ENCODE measurements at regions of chr5 and their contacts with region 1.

Region 1: DNA sequence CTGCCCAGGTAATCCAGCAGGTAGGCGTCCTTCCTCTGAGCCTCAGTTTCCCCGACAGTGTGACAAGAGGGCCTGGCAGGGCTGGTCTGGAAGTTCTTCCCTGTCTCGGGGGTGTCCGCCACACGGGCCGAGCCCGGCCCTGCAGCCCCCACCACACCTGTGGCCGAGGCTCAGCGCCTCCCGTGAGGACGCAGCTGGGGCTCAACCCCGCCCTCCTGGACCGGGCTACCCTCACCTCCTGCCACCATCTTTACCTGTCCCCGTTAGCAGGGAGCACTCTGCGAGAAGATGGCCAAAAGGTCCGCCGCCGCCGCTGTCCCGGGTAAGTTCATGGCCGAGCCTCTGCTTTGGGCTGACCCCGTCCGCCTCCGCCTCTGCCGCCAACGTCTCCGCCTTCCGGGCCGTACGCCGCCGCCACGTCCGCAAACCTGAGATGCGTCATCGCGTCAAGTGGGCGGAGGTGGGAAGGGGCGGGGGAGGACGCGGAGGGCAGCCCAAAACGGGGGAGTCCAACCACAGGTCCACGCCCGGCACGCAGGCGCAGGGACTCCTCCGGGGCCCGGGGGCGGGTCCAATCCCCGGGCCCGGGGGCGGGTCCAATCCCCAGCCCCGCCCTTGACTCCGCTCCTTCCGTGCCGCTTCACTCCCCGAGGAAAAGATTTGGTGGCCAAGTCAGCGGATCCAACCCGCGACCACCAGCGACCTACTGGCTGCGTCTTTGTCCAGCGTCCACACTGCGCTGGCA is at the start of gene LYSMD3:
- DNase-seq: peak; percentile 96
- H3K4me3 Mint-ChIP-seq: peak within 1 kb of the TSS; percentile 95
- H3K27ac Mint-ChIP-seq: peak within 1 kb of the TSS; percentile 77
- H3K4me1 Mint-ChIP-seq: peaks cover 21% of the 10 kb centered on the region
- H3K27me3 Mint-ChIP-seq: peaks cover 33% of the 10 kb centered on the region
- CTCF ChIP-seq: no peak
- total RNA-seq, gene LYSMD3: 25.6 and 27.4 TPM in 2 replicates

Region 2: DNA sequence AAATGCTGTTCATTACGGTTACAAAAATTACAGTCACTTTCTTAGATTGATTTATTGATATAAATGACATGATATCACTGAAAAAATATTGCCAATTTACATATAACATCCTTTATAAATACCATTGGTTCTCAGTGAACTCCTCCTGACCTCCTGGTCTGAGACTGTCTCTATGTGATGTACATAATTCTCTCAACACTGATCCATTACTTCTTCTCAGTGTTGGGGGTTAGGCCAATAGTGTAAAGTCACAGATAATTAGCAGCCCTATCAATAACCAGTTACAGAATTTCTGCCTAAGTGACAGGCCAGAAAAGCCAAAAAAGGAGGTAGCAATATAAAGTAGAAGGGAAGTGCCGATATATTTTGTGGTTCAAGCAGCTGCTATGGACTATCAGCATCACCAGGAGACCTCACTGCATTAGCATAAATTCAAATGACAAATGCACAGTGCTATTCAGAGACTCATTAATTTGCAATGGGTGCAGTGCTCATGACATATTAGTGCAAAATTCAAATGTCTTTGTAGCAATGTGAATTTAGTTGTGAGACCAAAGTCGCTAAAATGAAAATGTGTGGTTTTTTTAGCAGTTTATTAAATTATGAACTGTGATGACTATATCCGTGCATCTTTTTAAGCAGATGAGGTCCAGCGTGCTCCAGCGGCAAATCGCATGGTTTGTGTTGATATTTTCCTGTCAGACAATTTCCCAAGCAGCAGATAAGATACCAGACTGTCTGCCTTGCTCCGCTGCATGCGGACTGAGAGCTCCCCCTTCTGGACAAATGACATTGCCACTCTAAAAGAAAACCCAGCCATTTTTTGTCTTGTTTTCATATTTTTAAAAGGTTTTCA is 264.4 kb before region 1 on chr5:
- CTCF ChIA-PET with region 1: no interaction called
- POLR2A ChIA-PET with region 1: no interaction called
- intact Hi-C with region 1: loop called (anchors 5 kb)
- DNase-seq: peak; percentile 67
- H3K4me3 Mint-ChIP-seq: no peak overlapping the region
- H3K27ac Mint-ChIP-seq: no peak overlapping the region
- H3K4me1 Mint-ChIP-seq: no peaks in the 10 kb centered on the region
- H3K27me3 Mint-ChIP-seq: peaks cover 38% of the 10 kb centered on the region
- CTCF ChIP-seq: peak; percentile 85

Region 3: GRCh38 chr5:90409318-90410177 is 119.8 kb before region 1 on chr5 and contains the start of gene CETN3:
- CTCF ChIA-PET with region 1: interaction called, 8 read pairs
- POLR2A ChIA-PET with region 1: interaction called, 37 read pairs
- intact Hi-C with region 1: loop called (anchors 1 kb)
- DNase-seq: peak; percentile 95
- H3K4me3 Mint-ChIP-seq: no peak within 1 kb of the TSS
- H3K27ac Mint-ChIP-seq: no peak within 1 kb of the TSS
- H3K4me1 Mint-ChIP-seq: peaks cover 22% of the 10 kb centered on the region
- H3K27me3 Mint-ChIP-seq: no peaks in the 10 kb centered on the region
- CTCF ChIP-seq: no peak
- total RNA-seq, gene CETN3: 24.8 and 28.4 TPM in 2 replicates

Region 4: GRCh38 chr5:90434116-90434714 is 95.2 kb before region 1 on chr5:
- CTCF ChIA-PET with region 1: interaction called, 79 read pairs
- POLR2A ChIA-PET with region 1: interaction called, 34 read pairs
- intact Hi-C with region 1: loop called (anchors 1 kb)
- DNase-seq: peak; percentile 54
- H3K4me3 Mint-ChIP-seq: no peak overlapping the region
- H3K27ac Mint-ChIP-seq: no peak overlapping the region
- H3K4me1 Mint-ChIP-seq: no peaks in the 10 kb centered on the region
- H3K27me3 Mint-ChIP-seq: peaks cover 15% of the 10 kb centered on the region
- CTCF ChIP-seq: peak; percentile 41

Region 5: DNA sequence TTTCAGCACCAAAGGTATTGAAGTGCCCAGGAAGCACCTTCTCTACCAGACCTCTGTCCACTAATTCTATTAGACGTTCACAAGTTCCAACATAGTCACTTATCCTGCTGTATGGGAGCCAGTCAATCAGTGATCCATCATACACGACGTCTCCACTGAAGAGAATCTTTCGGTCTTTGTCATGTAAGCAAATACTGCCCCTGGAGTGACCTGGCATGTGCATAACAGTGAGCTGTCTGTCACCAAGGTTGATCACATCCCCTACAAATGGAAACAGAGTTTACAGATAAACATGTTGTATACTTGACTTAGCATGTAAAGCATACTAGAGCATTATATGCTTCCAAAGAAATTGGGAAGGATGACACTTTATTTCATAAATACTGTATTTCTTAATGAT is 68.1 kb before region 1 on chr5:
- CTCF ChIA-PET with region 1: interaction called, 12 read pairs
- POLR2A ChIA-PET with region 1: interaction called, 39 read pairs
- intact Hi-C with region 1: no loop called
- DNase-seq: no peak
- H3K4me3 Mint-ChIP-seq: no peak overlapping the region
- H3K27ac Mint-ChIP-seq: peak overlapping the region; percentile 81
- H3K4me1 Mint-ChIP-seq: no peaks in the 10 kb centered on the region
- H3K27me3 Mint-ChIP-seq: no peaks in the 10 kb centered on the region
- CTCF ChIP-seq: no peak

Region 6: GRCh38 chr5:90518661-90519060 is 10.7 kb before region 1 on chr5:
- CTCF ChIA-PET with region 1: interaction called, 4 read pairs
- POLR2A ChIA-PET with region 1: interaction called, 10 read pairs
- intact Hi-C with region 1: no loop called
- DNase-seq: peak; percentile 7
- H3K4me3 Mint-ChIP-seq: no peak overlapping the region
- H3K27ac Mint-ChIP-seq: no peak overlapping the region
- H3K4me1 Mint-ChIP-seq: peaks cover 14% of the 10 kb centered on the region
- H3K27me3 Mint-ChIP-seq: no peaks in the 10 kb centered on the region
- CTCF ChIP-seq: no peak